ENCODE measurements at regions of chr20 and their contacts with region 1.

Region 1: DNA sequence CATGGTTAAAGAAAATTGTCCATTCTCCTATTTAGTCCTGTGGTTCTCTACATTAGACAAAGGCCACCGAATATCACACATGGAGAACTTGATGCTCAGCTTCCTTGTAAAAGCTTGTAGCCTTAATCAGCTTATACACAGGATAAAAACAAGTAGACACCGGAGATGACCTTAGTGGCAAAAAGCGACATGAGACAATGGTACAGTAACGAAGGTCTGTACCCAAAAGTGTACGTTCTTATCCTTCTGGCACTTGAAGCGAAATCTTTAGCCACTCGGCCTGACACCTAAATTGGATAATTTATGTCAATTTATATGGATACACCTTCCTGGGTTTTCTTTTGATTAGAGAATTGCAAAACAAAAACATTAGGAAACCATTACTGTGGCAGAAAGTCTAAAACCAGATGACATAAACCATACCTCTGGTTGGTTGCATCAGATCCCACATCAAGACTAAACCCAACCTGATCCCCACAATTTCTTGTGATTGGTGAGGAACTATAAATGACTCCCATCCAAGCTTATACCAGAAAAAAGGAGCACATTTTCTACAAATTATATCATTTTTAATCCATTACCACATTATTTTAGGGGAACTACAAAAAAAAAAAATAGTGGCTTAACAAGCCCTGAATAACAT is 6.1 kb downstream of the RBM39 start:
- DNase-seq: no peak
- H3K4me3 ChIP-seq: no peak overlapping the region
- H3K27ac ChIP-seq: no peak overlapping the region
- H3K4me1 ChIP-seq: peaks cover 35% of the 10 kb centered on the region
- H3K27me3 ChIP-seq: no peaks in the 10 kb centered on the region
- CTCF ChIP-seq: no peak

Region 2: GRCh38 chr20:35583636-35584560 is 152.1 kb before region 1 on chr20:
- CTCF ChIA-PET with region 1: no interaction called
- POLR2A ChIA-PET with region 1: no interaction called
- intact Hi-C with region 1: no loop called
- DNase-seq: no peak
- H3K4me3 ChIP-seq: no peak overlapping the region
- H3K27ac ChIP-seq: no peak overlapping the region
- H3K4me1 ChIP-seq: no peaks in the 10 kb centered on the region
- H3K27me3 ChIP-seq: no peaks in the 10 kb centered on the region
- CTCF ChIP-seq: no peak

Region 3: GRCh38 chr20:35871311-35871771 is 135.4 kb after region 1 on chr20:
- CTCF ChIA-PET with region 1: no interaction called
- POLR2A ChIA-PET with region 1: interaction called, 10 read pairs
- intact Hi-C with region 1: no loop called
- DNase-seq: peak; percentile 54
- H3K4me3 ChIP-seq: peak overlapping the region; percentile 12
- H3K27ac ChIP-seq: peak overlapping the region; percentile 76
- H3K4me1 ChIP-seq: peaks cover 18% of the 10 kb centered on the region
- H3K27me3 ChIP-seq: no peaks in the 10 kb centered on the region
- CTCF ChIP-seq: no peak

Region 4: DNA sequence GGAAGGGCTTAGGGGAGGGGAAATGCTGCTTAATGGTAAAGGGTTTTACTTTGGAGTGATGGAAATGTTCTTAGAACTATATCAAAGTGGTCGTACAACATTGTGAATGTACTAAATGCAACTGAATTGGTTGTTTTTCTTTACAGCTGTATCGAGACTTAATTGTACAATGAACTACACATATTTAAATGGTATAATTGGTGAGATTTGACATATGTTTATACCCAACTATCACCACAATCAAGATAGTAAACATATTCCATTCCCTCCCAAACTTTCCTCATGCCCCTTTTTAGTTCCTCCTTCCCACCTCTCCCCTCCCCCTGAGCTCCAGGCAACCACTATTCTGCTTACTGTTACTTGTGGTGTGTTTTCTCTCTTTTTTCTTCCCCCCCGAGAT is 174.3 kb after region 1 on chr20:
- CTCF ChIA-PET with region 1: no interaction called
- POLR2A ChIA-PET with region 1: interaction called, 11 read pairs
- intact Hi-C with region 1: no loop called
- DNase-seq: no peak
- H3K4me3 ChIP-seq: no peak overlapping the region
- H3K27ac ChIP-seq: no peak overlapping the region
- H3K4me1 ChIP-seq: no peaks in the 10 kb centered on the region
- H3K27me3 ChIP-seq: no peaks in the 10 kb centered on the region
- CTCF ChIP-seq: no peak

Region 5: DNA sequence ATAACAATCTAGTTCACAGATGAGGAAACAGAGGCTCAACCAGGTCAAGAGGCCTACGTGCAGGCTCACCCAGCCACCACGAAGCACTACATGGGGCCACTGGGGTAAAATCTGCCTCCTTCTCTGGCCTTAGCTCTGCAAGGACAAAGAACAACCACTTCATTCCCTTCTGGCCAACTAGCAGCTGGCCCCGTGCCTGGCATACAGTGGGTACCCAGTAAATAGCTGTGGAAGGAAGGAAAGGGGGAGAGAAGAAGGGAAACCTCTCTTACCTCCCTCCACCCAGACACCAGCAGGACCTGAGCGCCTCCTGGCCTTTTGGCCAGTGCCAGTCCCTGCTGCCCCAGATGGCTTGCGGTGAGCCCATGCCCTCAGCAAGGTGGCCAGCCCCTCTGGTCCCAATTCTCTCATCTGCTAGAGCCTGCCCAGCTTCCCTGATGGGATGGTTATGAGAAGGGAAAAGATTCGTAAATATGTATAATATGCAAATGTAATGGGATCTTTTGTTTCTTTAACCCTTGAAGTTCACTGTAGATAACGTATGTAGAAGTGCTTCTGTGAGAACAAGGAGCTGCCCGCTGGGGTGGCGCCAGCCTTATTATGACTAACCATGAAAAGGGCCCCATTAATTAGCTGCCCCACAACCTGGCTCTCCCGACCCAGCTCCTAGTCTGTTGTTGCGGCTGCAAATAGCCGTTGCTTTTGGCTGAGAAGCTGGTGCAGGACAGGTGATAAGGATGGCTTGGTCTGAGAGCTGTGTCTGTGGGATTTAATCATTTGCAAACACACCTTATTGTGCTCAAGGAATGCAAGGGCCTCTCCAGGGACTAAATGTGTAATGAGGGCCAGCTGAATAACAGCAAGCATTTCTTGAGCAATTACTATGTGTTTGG is 632.2 kb after region 1 on chr20:
- CTCF ChIA-PET with region 1: no interaction called
- POLR2A ChIA-PET with region 1: no interaction called
- intact Hi-C with region 1: no loop called
- DNase-seq: no peak
- H3K4me3 ChIP-seq: no peak overlapping the region
- H3K27ac ChIP-seq: no peak overlapping the region
- H3K4me1 ChIP-seq: no peaks in the 10 kb centered on the region
- H3K27me3 ChIP-seq: no peaks in the 10 kb centered on the region
- CTCF ChIP-seq: no peak

Measured in A673 (cell line).